Posterior vena cava (tissue), 2 donors: ENCODE measurements at regions of chr11 and their contacts with region 1.

Region 1: DNA sequence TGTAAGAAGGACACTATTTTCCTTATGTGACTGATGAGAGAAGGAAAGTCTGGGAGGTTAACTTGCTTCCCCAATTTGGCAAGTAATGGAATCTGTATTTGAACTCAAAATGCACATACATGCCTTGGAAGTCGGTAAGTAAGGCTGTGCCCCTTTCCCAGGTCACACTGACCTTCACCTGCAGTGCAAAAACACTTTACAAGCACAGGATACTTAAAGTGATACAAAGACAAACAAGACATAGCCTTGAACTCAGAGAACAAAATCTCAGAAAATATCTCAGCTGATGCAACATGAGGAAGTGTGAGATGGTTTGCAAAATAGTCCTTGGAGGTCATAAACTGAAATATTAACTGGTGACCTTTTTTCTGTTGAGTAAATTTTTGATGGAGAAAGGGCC is 251.1 kb downstream of the RAB38 start:
- DNase-seq: no peak

Region 2: DNA sequence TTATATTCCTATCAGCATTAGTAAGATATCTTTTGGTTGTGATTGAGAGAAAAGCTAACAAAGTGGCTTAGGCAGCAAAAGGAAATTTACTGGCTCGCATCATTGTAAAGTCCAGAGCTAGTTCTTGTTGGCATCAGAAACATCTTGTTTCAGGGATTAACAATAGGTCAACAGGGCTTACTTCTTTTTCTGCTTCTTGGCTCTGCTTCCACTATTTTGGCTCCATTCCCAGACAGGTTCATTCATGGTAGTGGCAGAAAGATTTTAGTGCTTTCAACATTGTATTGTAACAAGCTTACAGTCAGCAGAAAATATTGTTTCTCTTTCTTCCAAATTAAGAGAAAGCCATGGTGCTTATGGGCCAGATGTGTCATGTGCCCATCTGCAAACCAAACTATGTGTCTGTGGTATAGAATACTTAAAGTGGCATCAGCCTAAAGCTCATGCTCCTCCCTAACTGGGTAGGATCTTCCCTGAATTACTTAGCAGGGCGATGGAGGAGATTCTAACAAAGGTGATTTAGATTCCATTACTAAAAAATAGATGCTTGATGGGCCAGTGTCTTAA is 64.5 kb before region 1 on chr11:
- intact Hi-C with region 1: loop called in 1 of 2 experiments (anchors 2 kb)
- DNase-seq: no peak